A549 (cell line): ENCODE measurements at regions of chr17 and their contacts with region 1.

Region 1: DNA sequence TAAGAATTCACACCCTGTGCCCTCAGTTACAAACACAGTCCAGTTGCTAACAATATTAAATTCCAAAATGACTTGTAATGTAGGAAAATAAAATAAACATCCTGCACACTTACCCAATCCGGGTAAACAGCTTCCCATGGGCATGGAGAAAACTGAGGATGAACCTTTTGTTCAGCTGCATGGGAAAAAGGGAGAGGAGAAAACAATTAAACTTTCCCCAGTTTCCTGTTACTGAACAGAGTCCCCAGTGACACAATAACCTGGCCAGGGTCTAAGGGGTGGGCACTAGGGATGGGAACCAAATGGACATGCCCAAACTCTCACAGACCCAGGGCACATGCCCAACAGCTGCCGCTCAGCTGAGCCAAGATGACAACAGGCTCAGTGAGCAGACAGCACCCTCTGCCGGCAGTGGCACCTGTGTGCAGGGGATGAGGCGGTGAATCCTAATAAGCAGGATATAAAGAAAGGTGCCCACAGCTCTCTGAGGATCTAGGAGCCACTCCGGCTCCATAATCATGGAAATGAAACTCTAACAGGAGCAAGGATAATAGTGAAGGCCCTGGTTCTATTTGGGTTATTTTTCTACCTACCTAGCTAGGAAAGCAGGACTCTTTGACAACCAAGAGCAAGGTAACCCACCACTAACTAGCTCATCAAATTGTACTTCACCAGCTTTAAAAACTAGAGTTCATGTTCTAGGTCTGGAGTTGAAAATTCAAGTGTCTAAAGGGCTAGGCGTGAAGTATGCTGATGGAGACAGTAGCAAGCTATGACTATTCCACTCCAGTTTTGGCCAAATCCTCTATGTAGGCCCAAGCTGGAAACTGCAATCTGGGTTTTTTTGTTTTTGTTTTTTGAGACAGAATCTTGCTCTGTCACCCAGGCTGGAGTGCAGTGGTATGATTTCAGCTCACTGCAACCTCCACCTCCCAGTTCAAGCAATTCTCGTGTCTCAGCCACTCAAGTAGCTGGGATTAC is 58.8 kb downstream of the SMG6 start:
- DNase-seq: peak; percentile 84 to 94
- ATAC-seq: peak; percentile 98 to 99
- H3K4me3 ChIP-seq: no peak overlapping the region
- H3K27ac ChIP-seq: no peak overlapping the region
- H3K4me1 ChIP-seq: peaks cover 16% of the 10 kb centered on the region
- CTCF ChIP-seq: peak; percentile 99
- EP300 ChIP-seq: no peak; a peak in 1 of 5 replicates
- POLR2A ChIP-seq: no peak
- RAD21 ChIP-seq: peak; percentile 98 to 99

Region 2: GRCh38 chr17:1882836-1883235 is 362.0 kb before region 1 on chr17:
- CTCF ChIA-PET with region 1: interaction called, 17 read pairs
- POLR2A ChIA-PET with region 1: no interaction called
- DNase-seq: peak; percentile 59 to 66
- ATAC-seq: peak; percentile 41 to 80; a peak in 3 of 6 replicates
- H3K4me3 ChIP-seq: no peak overlapping the region
- H3K27ac ChIP-seq: no peak overlapping the region
- H3K4me1 ChIP-seq: no peaks in the 10 kb centered on the region
- CTCF ChIP-seq: peak; percentile 58
- EP300 ChIP-seq: no peak
- POLR2A ChIP-seq: no peak
- RAD21 ChIP-seq: peak; percentile 59 to 65

Region 3: GRCh38 chr17:2054512-2055291 is 190.1 kb before region 1 on chr17 and contains the start of gene HIC1:
- CTCF ChIA-PET with region 1: interaction called, 492 read pairs
- POLR2A ChIA-PET with region 1: interaction called, 8 read pairs
- DNase-seq: peak; percentile 83 to 92
- ATAC-seq: peak; percentile 48 to 82
- H3K4me3 ChIP-seq: peak within 1 kb of the TSS; percentile 50
- H3K27ac ChIP-seq: peak within 1 kb of the TSS; percentile 39 to 82; a peak in 5 of 6 replicates
- H3K4me1 ChIP-seq: 0 out of 3 replicates have a peak, but pooled peaks cover 5% of the 10 kb centered on the region
- CTCF ChIP-seq: peak; percentile 98
- EP300 ChIP-seq: no peak
- POLR2A ChIP-seq: no peak
- RAD21 ChIP-seq: peak; percentile 71 to 94
- polyA plus RNA-seq, gene HIC1: 0.13 and 0.28 TPM in 2 replicates

Region 4: DNA sequence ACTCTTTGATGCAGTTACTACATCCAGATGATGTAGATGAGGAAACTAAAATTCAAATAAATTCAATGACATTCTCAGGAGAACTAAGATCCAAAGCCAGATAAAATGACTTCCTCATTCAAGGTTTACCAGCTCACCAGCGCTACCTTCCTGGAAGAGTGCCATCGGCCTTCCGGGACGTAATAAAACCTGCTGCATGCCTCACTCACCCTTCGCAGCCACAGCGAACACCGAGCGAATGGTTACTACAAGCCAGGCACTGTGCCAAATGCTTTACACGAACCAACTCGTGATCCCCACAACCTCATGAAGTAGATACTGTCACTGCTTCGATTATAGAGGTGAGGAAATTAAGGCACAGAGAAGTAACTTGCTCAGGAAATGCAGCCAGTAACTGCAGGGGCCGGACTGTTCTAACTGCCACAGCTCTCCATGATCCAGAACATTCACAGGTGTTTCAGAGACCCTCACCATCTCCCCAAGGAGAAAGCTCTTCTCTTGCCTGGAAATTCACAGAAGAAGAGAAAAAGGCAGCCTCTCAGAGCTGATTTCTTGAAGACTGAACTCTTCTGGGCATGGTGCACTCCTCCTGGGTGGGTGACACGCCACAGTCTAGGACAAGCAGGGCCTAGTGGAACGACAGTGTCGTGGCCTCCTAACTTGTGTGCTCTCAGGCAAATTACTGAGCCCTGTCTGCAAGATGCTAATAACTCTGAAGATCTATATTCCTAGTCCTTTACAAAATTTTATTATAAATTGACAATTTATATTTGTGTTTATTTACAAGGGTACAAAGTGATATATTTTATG is 143.2 kb before region 1 on chr17:
- CTCF ChIA-PET with region 1: interaction called, 18 read pairs
- POLR2A ChIA-PET with region 1: no interaction called
- DNase-seq: no peak
- ATAC-seq: no peak
- H3K4me3 ChIP-seq: no peak overlapping the region
- H3K27ac ChIP-seq: no peak overlapping the region
- H3K4me1 ChIP-seq: no peaks in the 10 kb centered on the region
- CTCF ChIP-seq: no peak
- EP300 ChIP-seq: no peak
- POLR2A ChIP-seq: no peak
- RAD21 ChIP-seq: no peak

Region 5: GRCh38 chr17:2179615-2180295 is 65.1 kb before region 1 on chr17:
- CTCF ChIA-PET with region 1: interaction called, 13 read pairs
- POLR2A ChIA-PET with region 1: interaction called, 5 read pairs
- DNase-seq: no peak
- ATAC-seq: no peak
- H3K4me3 ChIP-seq: no peak overlapping the region
- H3K27ac ChIP-seq: no peak overlapping the region
- H3K4me1 ChIP-seq: peaks cover 9% of the 10 kb centered on the region
- CTCF ChIP-seq: no peak
- EP300 ChIP-seq: no peak
- POLR2A ChIP-seq: no peak
- RAD21 ChIP-seq: no peak

Region 6: GRCh38 chr17:2222901-2223616 is 21.8 kb before region 1 on chr17:
- CTCF ChIA-PET with region 1: interaction called, 46 read pairs
- POLR2A ChIA-PET with region 1: no interaction called
- DNase-seq: no peak
- ATAC-seq: no peak
- H3K4me3 ChIP-seq: no peak overlapping the region
- H3K27ac ChIP-seq: no peak overlapping the region
- H3K4me1 ChIP-seq: no peaks in the 10 kb centered on the region
- CTCF ChIP-seq: no peak
- EP300 ChIP-seq: no peak
- POLR2A ChIP-seq: no peak
- RAD21 ChIP-seq: no peak

Region 7: DNA sequence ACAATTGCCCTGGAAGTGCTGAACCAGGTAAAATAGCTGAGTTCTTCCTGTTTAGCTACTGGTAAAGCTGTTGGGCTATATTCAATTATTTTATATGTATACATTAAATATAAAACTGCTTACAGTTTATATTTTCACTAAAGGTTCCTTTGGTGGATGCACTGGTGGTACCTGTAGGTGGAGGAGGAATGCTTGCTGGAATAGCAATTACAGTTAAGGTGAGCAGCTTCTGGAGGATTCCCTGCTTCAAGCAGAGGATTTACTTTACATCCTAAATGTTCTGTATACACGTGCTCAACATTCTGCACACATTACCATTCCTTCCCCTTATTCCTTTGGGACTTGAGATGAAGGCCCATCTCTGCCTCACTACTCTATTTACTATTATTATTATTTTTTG is 76.6 kb after region 1 on chr17:
- CTCF ChIA-PET with region 1: no interaction called
- POLR2A ChIA-PET with region 1: no interaction called
- DNase-seq: no peak
- ATAC-seq: no peak
- H3K4me3 ChIP-seq: no peak overlapping the region
- H3K27ac ChIP-seq: no peak overlapping the region
- H3K4me1 ChIP-seq: no peaks in the 10 kb centered on the region
- CTCF ChIP-seq: no peak
- EP300 ChIP-seq: no peak
- POLR2A ChIP-seq: no peak
- RAD21 ChIP-seq: no peak